H1 (cell line): ENCODE measurements at regions of chr19 and their contacts with region 1.

Region 1: GRCh38 chr19:11374433-11375142 is at the start of gene SWSAP1:
- DNase-seq: peak; percentile 97 to 98
- H3K4me3 ChIP-seq: peak within 1 kb of the TSS; percentile 67 to 90 (median 71)
- H3K27ac ChIP-seq: peak within 1 kb of the TSS; percentile 91
- H3K4me1 ChIP-seq: peaks cover 0 to 10% (median 8%) of the 10 kb centered on the region in 4 experiments; a peak in 6 of 7 replicates
- H3K27me3 ChIP-seq: no peaks in the 10 kb centered on the region
- CTCF ChIP-seq: no peak
- EP300 ChIP-seq: no peak
- POLR2A ChIP-seq: peak in 1 of 2 experiments; percentile 98; a peak in 2 of 3 replicates
- RAD21 ChIP-seq: no peak
- total RNA-seq, gene SWSAP1: 3.1 and 3.2 TPM in 2 replicates

Region 2: GRCh38 chr19:11242864-11243797 is 131.5 kb before region 1 on chr19:
- CTCF ChIA-PET with region 1: no interaction called
- POLR2A ChIA-PET with region 1: no interaction called
- DNase-seq: peak; percentile 70 to 100
- H3K4me3 ChIP-seq: peak overlapping the region in 2 of 4 experiments; percentile 34 to 37; a peak in 5 of 8 replicates
- H3K27ac ChIP-seq: no peak overlapping the region
- H3K4me1 ChIP-seq: peaks cover 3 to 5% (median 4%) of the 10 kb centered on the region in 4 experiments; a peak in 4 of 7 replicates
- H3K27me3 ChIP-seq: no peaks in the 10 kb centered on the region
- CTCF ChIP-seq: peak; percentile 61 to 80 (median 67)
- EP300 ChIP-seq: no peak
- POLR2A ChIP-seq: 0 out of 3 replicates have a peak, but pooled peaks of 1 of the 2 experiments have one; percentile 12
- RAD21 ChIP-seq: peak; percentile 21 to 34; a peak in 2 of 4 replicates

Region 3: GRCh38 chr19:11346092-11346940 is 28.3 kb before region 1 on chr19 and contains the starts of genes CCDC159 and TMEM205:
- CTCF ChIA-PET with region 1: interaction called, 6 read pairs
- POLR2A ChIA-PET with region 1: interaction called, 11 read pairs
- DNase-seq: peak; percentile 96 to 97
- H3K4me3 ChIP-seq: peak within 1 kb of the TSS; percentile 63 to 94 (median 84)
- H3K27ac ChIP-seq: 0 out of 2 replicates have a peak within 1 kb of the TSS, but pooled peaks have one; percentile 37
- H3K4me1 ChIP-seq: peaks cover 0 to 10% (median 6%) of the 10 kb centered on the region in 4 experiments; a peak in 5 of 7 replicates
- H3K27me3 ChIP-seq: no peaks in the 10 kb centered on the region
- CTCF ChIP-seq: no peak
- EP300 ChIP-seq: no peak
- POLR2A ChIP-seq: peak in 1 of 2 experiments; percentile 31; a peak in 1 of 3 replicates
- RAD21 ChIP-seq: no peak
- total RNA-seq, gene CCDC159: 4.0 and 5.5 TPM in 2 replicates
- total RNA-seq, gene TMEM205: 73.5 and 78.2 TPM in 2 replicates

Region 4: GRCh38 chr19:11387162-11388034 is 12.8 kb after region 1 on chr19:
- CTCF ChIA-PET with region 1: interaction called, 49 read pairs
- POLR2A ChIA-PET with region 1: interaction called, 22 read pairs
- DNase-seq: no peak
- H3K4me3 ChIP-seq: no peak overlapping the region
- H3K27ac ChIP-seq: no peak overlapping the region
- H3K4me1 ChIP-seq: peaks cover 0 to 3% (median 0%) of the 10 kb centered on the region in 4 experiments; a peak in 2 of 7 replicates
- H3K27me3 ChIP-seq: no peaks in the 10 kb centered on the region
- CTCF ChIP-seq: no peak
- EP300 ChIP-seq: no peak
- POLR2A ChIP-seq: no peak
- RAD21 ChIP-seq: no peak

Region 5: GRCh38 chr19:11435058-11435832 is 60.7 kb after region 1 on chr19 and contains the starts of genes ODAD3 and PRKCSH:
- CTCF ChIA-PET with region 1: interaction called, 192 read pairs
- POLR2A ChIA-PET with region 1: interaction called, 10 read pairs
- DNase-seq: peak; percentile 98 to 99
- H3K4me3 ChIP-seq: peak within 1 kb of the TSS; percentile 86 to 99 (median 93)
- H3K27ac ChIP-seq: peak within 1 kb of the TSS; percentile 91
- H3K4me1 ChIP-seq: peaks cover 0 to 13% (median 7%) of the 10 kb centered on the region in 4 experiments; a peak in 5 of 7 replicates
- H3K27me3 ChIP-seq: no peaks in the 10 kb centered on the region
- CTCF ChIP-seq: peak; percentile 84 to 95 (median 86)
- EP300 ChIP-seq: peak in 1 of 2 experiments; percentile 51; a peak in 1 of 3 replicates
- POLR2A ChIP-seq: peak in 1 of 2 experiments; percentile 88; a peak in 2 of 3 replicates
- RAD21 ChIP-seq: peak; percentile 27 to 34; a peak in 2 of 4 replicates
- total RNA-seq, gene ODAD3: 1.6 and 2.2 TPM in 2 replicates
- total RNA-seq, gene PRKCSH: 337 and 341 TPM in 2 replicates

Region 6: DNA sequence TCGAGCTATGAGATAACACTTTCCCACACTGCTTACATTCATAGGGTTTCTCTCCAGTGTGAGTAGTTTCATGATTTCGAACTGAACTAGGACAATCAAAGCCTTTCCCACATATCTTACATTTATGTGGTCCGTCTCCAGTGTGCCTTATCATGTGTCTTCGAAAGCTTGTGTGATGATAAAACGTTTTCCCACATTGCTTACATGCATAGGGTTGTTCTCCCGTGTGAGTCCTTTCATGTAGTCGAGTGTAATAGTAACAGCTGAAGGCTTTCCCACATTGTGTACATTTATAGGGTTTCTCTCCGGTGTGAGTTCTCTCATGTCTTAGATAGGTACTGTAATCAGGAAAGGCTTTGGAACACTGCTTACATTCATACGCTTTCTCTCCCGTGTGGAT is 347.8 kb after region 1 on chr19:
- CTCF ChIA-PET with region 1: no interaction called
- POLR2A ChIA-PET with region 1: no interaction called
- DNase-seq: no peak
- H3K4me3 ChIP-seq: no peak overlapping the region
- H3K27ac ChIP-seq: no peak overlapping the region
- H3K4me1 ChIP-seq: no peaks in the 10 kb centered on the region
- H3K27me3 ChIP-seq: no peaks in the 10 kb centered on the region
- CTCF ChIP-seq: no peak
- EP300 ChIP-seq: no peak
- POLR2A ChIP-seq: no peak
- RAD21 ChIP-seq: no peak